GM13977 (cell line): ENCODE measurements at regions of chr7 and their contacts with region 1.

Region 1: GRCh38 chr7:140653319-140654108 is 12.9 kb upstream of the DENND2A start:
- DNase-seq: no peak
- CTCF ChIP-seq: peak; percentile 86

Region 2: DNA sequence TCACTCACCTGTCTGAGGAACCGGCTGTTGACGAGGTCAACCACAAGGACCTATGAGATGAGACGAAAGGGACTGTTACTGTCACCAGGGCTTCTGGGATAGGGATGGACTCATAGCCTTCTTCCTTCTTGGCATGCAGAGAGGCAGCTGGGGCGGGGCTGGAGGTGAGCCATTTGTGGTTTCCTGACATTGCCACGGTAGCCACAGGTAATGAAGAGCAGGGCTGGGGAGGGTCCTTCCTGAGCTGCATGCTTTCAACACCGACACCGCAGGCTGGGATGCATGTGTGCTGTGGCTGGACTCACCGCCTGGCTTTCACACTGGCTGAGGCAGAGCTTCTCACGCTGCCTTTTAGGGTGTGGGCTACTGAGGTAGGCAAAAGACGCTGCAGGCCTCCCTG is 127.8 kb before region 1 on chr7:
- in situ Hi-C with region 1: loop called (anchors 10 kb)
- DNase-seq: no peak
- CTCF ChIP-seq: no peak

Region 3: DNA sequence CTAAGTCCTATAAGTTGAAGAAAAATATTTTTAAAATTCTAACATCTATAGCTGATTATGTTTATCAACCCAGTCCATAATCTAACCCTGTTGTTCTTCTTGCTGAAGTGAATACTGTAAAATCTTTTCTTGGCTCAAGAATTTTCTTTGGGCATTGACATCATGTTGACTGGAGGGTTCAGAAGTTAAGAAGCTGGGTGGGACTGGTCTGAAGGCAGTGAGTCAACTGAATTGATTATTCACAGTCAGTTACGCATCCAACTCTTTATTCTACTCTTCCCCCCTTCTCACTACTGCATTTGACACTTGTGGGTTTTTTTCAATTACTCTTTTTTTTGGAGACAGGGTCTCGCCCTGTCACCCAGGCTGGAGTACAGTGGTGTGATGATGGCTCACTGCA is 43.9 kb before region 1 on chr7:
- in situ Hi-C with region 1: no loop called
- DNase-seq: no peak
- CTCF ChIP-seq: no peak